Caco-2 (cell line): ENCODE measurements at regions of chr14 and their contacts with region 1.

Region 1: DNA sequence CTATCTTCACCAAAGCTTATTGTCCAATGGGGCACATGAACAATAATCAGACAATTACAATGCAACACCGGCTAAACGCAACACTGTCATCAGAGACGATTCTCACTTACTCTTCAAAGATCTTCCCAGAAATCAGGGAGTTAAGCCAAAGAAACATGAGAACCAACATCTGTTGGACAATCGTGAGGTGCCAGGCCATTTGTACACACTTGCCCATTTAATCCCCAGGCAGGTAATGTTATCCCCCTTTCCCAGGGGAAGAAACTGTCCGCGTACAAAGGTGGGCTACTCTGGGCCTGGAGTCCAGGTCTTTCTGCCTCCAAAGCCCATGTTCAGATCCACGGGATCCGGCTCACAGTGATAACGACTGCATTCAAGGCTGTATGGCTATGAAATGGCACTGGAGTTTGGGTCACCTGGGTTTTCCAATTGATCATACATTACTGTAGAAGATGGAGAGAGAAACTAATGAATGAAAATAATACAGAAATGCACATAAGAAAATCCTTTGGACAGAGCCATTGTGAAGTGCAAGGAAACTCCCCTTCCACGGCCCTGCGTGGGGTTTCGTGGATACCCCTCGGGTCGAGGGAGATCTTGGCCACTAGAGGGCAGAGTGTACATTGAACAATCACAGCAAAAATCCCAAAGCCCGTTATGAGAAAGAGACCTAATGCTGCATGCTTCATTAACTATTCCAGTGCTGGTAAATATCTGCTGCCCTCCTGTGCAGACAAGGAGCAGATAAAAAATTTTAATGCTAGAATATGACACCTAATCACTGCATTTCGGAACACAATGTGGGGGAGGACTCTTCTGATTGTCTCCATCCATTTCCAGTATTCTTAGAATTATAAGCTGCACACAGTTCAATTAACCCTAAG is 111.4 kb downstream of the EGLN3 start:
- DNase-seq: peak; percentile 54 to 73
- H3K4me3 ChIP-seq: no peak overlapping the region
- H3K4me3 Mint-ChIP-seq: no peak overlapping the region
- H3K27ac Mint-ChIP-seq: no peak overlapping the region
- H3K4me1 ChIP-seq: peaks cover 10% of the 10 kb centered on the region
- H3K4me1 Mint-ChIP-seq: no peaks in the 10 kb centered on the region
- H3K27me3 ChIP-seq: no peaks in the 10 kb centered on the region
- H3K27me3 Mint-ChIP-seq: no peaks in the 10 kb centered on the region
- CTCF ChIP-seq: peak; percentile 74 to 78

Region 2: GRCh38 chr14:34023824-34024767 is 184.7 kb after region 1 on chr14:
- CTCF ChIA-PET with region 1: no interaction called
- POLR2A ChIA-PET with region 1: no interaction called
- intact Hi-C with region 1: loop called (anchors 2 kb)
- DNase-seq: peak in 1 of 2 experiments; percentile 20
- H3K4me3 ChIP-seq: no peak overlapping the region
- H3K4me3 Mint-ChIP-seq: no peak overlapping the region
- H3K27ac Mint-ChIP-seq: peak overlapping the region; percentile 48
- H3K4me1 ChIP-seq: no peaks in the 10 kb centered on the region
- H3K4me1 Mint-ChIP-seq: peaks cover 9% of the 10 kb centered on the region
- H3K27me3 ChIP-seq: no peaks in the 10 kb centered on the region
- H3K27me3 Mint-ChIP-seq: no peaks in the 10 kb centered on the region
- CTCF ChIP-seq: peak in 1 of 2 experiments; percentile 16

Region 3: DNA sequence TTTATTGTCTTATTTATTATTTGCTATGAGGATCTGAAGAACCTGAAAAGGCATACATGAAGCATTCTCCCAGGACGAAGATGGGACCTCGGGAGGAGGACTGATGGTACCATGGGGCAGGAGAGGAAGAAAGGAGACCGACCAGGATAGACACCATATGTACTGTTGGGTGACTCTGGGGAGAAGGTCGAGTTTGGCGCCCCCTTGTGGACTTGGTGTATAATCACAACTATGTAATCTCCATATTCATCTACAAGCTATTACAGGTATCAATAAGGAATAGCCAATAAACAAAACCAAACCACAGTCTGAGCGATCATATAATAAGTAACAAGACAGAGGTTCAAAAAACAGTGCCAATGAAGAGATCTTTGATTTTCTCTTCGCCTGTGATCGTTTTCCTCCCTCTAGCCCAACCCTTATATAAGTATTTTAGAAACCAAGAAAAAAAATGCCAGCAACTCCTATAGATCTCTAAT is 483.5 kb after region 1 on chr14:
- CTCF ChIA-PET with region 1: interaction called, 5 read pairs
- POLR2A ChIA-PET with region 1: no interaction called
- intact Hi-C with region 1: loop called (anchors 1 kb)
- DNase-seq: peak; percentile 56 to 71
- H3K4me3 ChIP-seq: no peak overlapping the region
- H3K4me3 Mint-ChIP-seq: no peak overlapping the region
- H3K27ac Mint-ChIP-seq: no peak overlapping the region
- H3K4me1 ChIP-seq: no peaks in the 10 kb centered on the region
- H3K4me1 Mint-ChIP-seq: no peaks in the 10 kb centered on the region
- H3K27me3 ChIP-seq: no peaks in the 10 kb centered on the region
- H3K27me3 Mint-ChIP-seq: no peaks in the 10 kb centered on the region
- CTCF ChIP-seq: peak; percentile 69 to 71